Breast epithelium (tissue), 4 donors: ENCODE measurements at regions of chr7 and their contacts with region 1.

Region 1: GRCh38 chr7:36244429-36244828 is 91.4 kb downstream of the EEPD1 start:
- DNase-seq: no peak
- H3K4me3 ChIP-seq: no peak overlapping the region
- H3K27ac ChIP-seq: no peak overlapping the region
- H3K4me1 ChIP-seq: no peaks in the 10 kb centered on the region
- H3K27me3 ChIP-seq: no peaks in the 10 kb centered on the region
- CTCF ChIP-seq: no peak
- POLR2A ChIP-seq: no peak

Region 2: GRCh38 chr7:35356495-35356894 is 887.9 kb before region 1 on chr7:
- intact Hi-C with region 1: no loop called
- DNase-seq: no peak
- H3K4me3 ChIP-seq: no peak overlapping the region
- H3K27ac ChIP-seq: no peak overlapping the region
- H3K4me1 ChIP-seq: no peaks in the 10 kb centered on the region
- H3K27me3 ChIP-seq: no peaks in the 10 kb centered on the region
- CTCF ChIP-seq: no peak
- POLR2A ChIP-seq: no peak

Region 3: GRCh38 chr7:36396150-36396549 is 151.7 kb after region 1 on chr7:
- intact Hi-C with region 1: loop called (anchors 5 kb)
- DNase-seq: no peak
- H3K4me3 ChIP-seq: no peak overlapping the region
- H3K27ac ChIP-seq: no peak overlapping the region
- H3K4me1 ChIP-seq: no peaks in the 10 kb centered on the region
- H3K27me3 ChIP-seq: no peaks in the 10 kb centered on the region
- CTCF ChIP-seq: no peak
- POLR2A ChIP-seq: no peak